OCI-LY7 (cell line): ENCODE measurements at regions of chr3 and their contacts with region 1.

Region 1: DNA sequence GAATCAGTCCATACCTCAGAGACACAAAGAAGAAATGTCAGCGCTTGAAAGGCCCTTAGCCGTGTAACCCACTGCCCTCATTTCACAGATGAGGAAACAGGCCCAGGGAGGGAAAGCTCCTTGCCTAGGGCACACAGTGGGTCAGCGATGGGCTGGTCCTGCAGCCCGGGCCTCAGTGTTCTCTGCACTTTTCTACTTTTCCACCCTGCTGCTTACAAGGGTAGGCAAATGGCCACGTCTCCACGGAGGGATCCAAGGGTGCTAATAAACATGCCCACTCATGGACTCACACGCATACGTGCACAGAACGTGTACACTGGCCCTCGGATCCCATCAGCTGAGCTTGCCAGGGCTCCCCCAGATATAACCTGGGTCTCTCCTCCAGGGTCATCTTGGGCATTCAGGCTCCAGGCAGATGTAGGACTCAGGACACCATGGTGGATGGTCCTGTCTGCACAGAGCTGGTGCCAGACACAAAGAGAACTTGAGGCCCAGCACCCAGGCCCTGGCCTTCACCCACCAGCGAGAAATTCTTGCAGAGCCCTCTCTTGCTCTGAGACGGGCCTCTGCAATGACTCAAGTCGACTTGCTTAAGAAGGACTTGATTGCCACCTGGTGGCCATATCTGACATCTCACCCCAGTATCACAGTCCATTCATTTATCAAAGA is 34.5 kb upstream of the VPS8 start:
- DNase-seq: peak; percentile 89
- H3K4me3 ChIP-seq: no peak overlapping the region
- H3K27ac ChIP-seq: no peak overlapping the region
- H3K4me1 ChIP-seq: no peaks in the 10 kb centered on the region
- CTCF ChIP-seq: peak; percentile 91

Region 2: DNA sequence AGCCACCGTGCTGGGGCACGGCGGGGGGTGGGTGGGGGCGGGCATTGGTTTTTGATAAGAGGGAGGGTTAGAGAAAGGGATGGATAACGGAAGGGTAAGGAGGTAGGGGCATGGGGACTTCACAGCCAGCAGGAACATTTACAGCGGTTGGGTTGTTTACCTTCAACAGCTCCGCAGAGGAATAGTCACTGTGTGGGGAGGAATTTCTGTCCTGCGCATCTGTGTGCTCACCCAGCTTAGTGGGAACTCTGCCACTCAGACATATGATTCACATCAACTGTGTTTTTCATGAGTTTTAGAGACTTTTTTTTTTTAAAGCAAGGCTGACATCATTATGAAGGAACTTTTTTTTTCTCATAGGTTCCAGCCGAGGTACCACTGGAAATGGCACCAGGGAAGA is 378.1 kb before region 1 on chr3:
- CTCF ChIA-PET with region 1: no interaction called
- POLR2A ChIA-PET with region 1: no interaction called
- intact Hi-C with region 1: loop called (anchors 10 kb)
- DNase-seq: no peak
- H3K4me3 ChIP-seq: no peak overlapping the region
- H3K27ac ChIP-seq: no peak overlapping the region
- H3K4me1 ChIP-seq: no peaks in the 10 kb centered on the region
- CTCF ChIP-seq: no peak

Region 3: GRCh38 chr3:185009650-185010049 is 232.2 kb after region 1 on chr3:
- CTCF ChIA-PET with region 1: no interaction called
- POLR2A ChIA-PET with region 1: no interaction called
- intact Hi-C with region 1: no loop called
- DNase-seq: no peak
- H3K4me3 ChIP-seq: no peak overlapping the region
- H3K27ac ChIP-seq: no peak overlapping the region
- H3K4me1 ChIP-seq: no peaks in the 10 kb centered on the region
- CTCF ChIP-seq: no peak